ENCODE measurements at regions of chr13 and their contacts with region 1.

Region 1: DNA sequence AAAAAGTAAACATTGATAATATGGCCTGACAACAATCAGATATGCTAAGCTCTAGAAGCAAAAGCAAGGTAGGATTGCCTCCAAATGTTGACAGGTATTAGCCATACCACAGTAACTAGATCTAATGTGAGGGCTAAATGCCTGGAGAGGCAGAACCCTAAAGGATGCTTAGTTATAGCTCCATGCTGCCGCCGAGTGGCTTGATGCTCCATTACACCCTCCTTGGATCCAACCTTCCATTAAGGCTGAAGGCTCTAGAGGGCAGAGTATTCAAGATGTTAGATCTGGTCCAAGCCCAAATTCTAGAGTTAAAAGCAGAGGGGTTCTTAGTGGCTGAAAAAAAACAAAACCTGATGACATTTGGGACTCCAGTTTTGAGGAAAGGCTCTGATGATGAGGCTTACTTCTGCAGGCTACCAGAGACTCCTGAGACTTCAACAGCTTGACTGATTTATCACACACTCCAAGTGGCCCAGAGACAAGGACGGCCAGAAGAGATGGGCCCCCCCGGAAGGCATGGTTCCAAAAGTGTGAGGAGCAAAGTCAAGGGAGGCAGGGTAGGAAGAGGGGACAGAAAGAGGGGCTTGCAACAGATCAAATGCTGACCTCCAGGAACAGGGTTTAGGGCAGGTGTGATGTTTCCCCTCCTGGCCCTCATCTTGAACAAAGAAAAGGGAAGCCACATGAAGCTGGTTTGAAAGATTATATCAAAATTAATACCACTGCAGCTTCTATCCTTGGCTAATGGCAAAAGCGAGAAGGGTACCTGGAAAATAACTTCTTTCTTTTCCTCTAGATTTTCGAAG is 21.9 kb upstream of the CPB2 start:
- DNase-seq: peak; percentile 68
- H3K4me3 ChIP-seq: no peak overlapping the region; a peak in 1 of 4 replicates
- H3K27ac ChIP-seq: no peak overlapping the region
- H3K4me1 ChIP-seq: peaks cover 0 to 13% of the 10 kb centered on the region in 2 experiments; a peak in 1 of 4 replicates
- H3K27me3 ChIP-seq: peaks cover 15% of the 10 kb centered on the region
- CTCF ChIP-seq: peak; percentile 84
- EP300 ChIP-seq: no peak
- RAD21 ChIP-seq: peak; percentile 94

Region 2: GRCh38 chr13:45623515-45624090 is 503.2 kb before region 1 on chr13:
- CTCF ChIA-PET with region 1: interaction called, 38 read pairs
- POLR2A ChIA-PET with region 1: no interaction called
- DNase-seq: peak; percentile 39
- H3K4me3 ChIP-seq: no peak overlapping the region; a peak in 1 of 4 replicates
- H3K27ac ChIP-seq: no peak overlapping the region
- H3K4me1 ChIP-seq: peaks cover 0 to 5% of the 10 kb centered on the region in 2 experiments; a peak in 2 of 4 replicates
- H3K27me3 ChIP-seq: no peaks in the 10 kb centered on the region
- CTCF ChIP-seq: peak; percentile 69
- EP300 ChIP-seq: no peak
- RAD21 ChIP-seq: peak; percentile 71

Region 3: GRCh38 chr13:45807520-45808099 is 319.1 kb before region 1 on chr13:
- CTCF ChIA-PET with region 1: interaction called, 57 read pairs
- POLR2A ChIA-PET with region 1: no interaction called
- DNase-seq: peak; percentile 65
- H3K4me3 ChIP-seq: no peak overlapping the region
- H3K27ac ChIP-seq: no peak overlapping the region
- H3K4me1 ChIP-seq: peaks cover 7 to 15% of the 10 kb centered on the region in 2 experiments; a peak in 3 of 4 replicates
- H3K27me3 ChIP-seq: no peaks in the 10 kb centered on the region
- CTCF ChIP-seq: peak; percentile 64
- EP300 ChIP-seq: no peak
- RAD21 ChIP-seq: peak; percentile 91

Region 4: GRCh38 chr13:46143184-46143701 is 16.5 kb after region 1 on chr13:
- CTCF ChIA-PET with region 1: interaction called, 37 read pairs
- POLR2A ChIA-PET with region 1: no interaction called
- DNase-seq: no peak
- H3K4me3 ChIP-seq: no peak overlapping the region
- H3K27ac ChIP-seq: no peak overlapping the region
- H3K4me1 ChIP-seq: no peaks in the 10 kb centered on the region; a peak in 2 of 4 replicates
- H3K27me3 ChIP-seq: no peaks in the 10 kb centered on the region
- CTCF ChIP-seq: no peak
- EP300 ChIP-seq: no peak
- RAD21 ChIP-seq: no peak

Region 5: GRCh38 chr13:46168341-46168740 is 41.6 kb after region 1 on chr13:
- CTCF ChIA-PET with region 1: interaction called, 10 read pairs
- POLR2A ChIA-PET with region 1: no interaction called
- DNase-seq: no peak
- H3K4me3 ChIP-seq: no peak overlapping the region
- H3K27ac ChIP-seq: no peak overlapping the region
- H3K4me1 ChIP-seq: peaks cover 0 to 5% of the 10 kb centered on the region in 2 experiments; a peak in 2 of 4 replicates
- H3K27me3 ChIP-seq: no peaks in the 10 kb centered on the region
- CTCF ChIP-seq: no peak
- EP300 ChIP-seq: no peak
- RAD21 ChIP-seq: no peak